Activated CD4-positive, alpha-beta memory T cell treated with anti-CD3 and anti-CD28 coated beads for 36 hours (primary cell): ENCODE measurements at regions of chr10 and their contacts with region 1.

Region 1: GRCh38 chr10:97498076-97498840 is at the start of gene MMS19:
- DNase-seq: peak; percentile 99
- H3K4me3 Mint-ChIP-seq: peak within 1 kb of the TSS; percentile 98
- H3K27ac Mint-ChIP-seq: peak within 1 kb of the TSS; percentile 97
- H3K4me1 Mint-ChIP-seq: peaks cover 33% of the 10 kb centered on the region
- H3K27me3 Mint-ChIP-seq: peaks cover 23% of the 10 kb centered on the region
- total RNA-seq, gene MMS19: 84.7 to 86.8 TPM

Region 2: DNA sequence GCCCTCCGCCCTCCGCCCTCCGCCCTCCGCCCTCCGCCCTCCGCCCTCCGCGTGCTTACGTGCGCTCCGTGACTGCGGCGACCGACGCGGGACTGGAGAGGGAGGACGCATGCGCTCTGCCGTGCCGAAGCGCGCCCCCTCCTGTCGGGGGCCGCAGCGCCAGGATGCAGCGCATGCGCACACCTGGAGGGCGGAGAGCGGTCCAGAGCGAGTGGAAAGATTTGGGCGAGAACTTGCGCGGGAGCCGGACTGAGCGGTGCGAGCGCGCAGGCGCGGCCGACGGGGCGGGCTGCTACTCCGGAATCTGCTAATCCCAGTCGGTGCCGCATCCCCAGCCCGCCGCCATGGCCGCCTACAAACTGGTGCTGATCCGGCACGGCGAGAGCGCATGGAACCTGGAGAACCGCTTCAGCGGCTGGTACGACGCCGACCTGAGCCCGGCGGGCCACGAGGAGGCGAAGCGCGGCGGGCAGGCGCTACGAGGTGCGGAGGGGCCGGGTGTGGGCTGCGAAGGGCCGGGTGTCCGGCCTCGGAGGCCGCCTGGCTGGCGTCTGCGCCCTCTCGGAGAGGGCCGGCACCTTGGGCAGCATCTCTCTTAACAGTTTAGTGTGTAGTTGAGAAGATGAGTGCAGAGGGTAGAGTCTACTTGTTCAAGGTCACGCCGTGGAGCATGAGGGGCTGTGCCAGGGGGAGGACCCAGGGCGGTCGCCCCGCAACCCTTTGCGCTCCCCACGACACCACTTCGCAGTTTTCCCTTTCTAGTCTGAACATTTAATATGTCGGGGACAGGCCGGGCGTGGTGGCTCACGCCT is 72.1 kb before region 1 on chr10 and contains the start of gene PGAM1:
- CTCF ChIA-PET with region 1: no interaction called
- POLR2A ChIA-PET with region 1: interaction called, 7 read pairs
- intact Hi-C with region 1: loop called (anchors 1 kb)
- DNase-seq: peak; percentile 97
- H3K4me3 Mint-ChIP-seq: peak within 1 kb of the TSS; percentile 93
- H3K27ac Mint-ChIP-seq: peak within 1 kb of the TSS; percentile 98
- H3K4me1 Mint-ChIP-seq: peaks cover 47% of the 10 kb centered on the region
- H3K27me3 Mint-ChIP-seq: peaks cover 2% of the 10 kb centered on the region
- total RNA-seq, gene PGAM1: 1,430 to 1,457 TPM

Region 3: DNA sequence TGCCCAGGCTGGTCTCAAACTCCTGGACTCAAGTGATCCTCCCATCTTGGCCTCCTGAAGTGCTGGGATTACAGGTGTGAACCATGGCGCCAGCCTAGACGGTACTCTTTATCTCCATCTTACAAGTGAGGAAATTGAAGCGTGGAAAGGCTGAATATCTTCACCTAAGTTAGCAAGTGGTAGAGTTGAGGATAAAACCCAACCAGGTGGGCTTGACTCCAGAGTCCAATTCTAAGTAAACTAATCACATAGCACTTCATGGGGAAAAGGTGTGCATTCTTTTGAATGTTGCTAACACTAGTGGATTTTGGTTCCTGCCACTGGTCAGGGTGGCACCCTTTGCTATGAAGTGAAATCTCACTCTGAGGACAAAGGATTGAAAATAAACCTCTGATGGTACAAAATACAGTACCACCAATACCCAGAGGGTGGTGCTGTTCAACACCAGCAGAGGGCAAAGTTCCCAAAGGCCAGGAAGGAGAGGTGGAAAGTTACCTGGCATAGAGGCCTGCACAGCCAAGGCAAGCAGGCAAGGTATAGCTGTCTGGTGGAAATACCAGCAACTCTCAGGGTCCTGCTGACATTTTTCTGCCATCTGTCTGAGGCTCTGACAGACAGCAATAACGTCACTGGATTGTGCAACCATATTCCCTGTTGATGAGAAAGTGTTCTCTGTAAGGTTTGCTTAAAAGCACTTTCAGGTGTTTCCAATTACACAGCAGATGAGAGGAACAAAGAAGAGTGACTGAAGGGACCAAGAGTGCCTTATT is 34.7 kb before region 1 on chr10:
- CTCF ChIA-PET with region 1: interaction called, 4 read pairs
- POLR2A ChIA-PET with region 1: no interaction called
- intact Hi-C with region 1: loop called (anchors 5 kb)
- DNase-seq: peak; percentile 36
- H3K4me3 Mint-ChIP-seq: no peak overlapping the region
- H3K27ac Mint-ChIP-seq: peak overlapping the region; percentile 3
- H3K4me1 Mint-ChIP-seq: no peaks in the 10 kb centered on the region
- H3K27me3 Mint-ChIP-seq: no peaks in the 10 kb centered on the region

Region 4: DNA sequence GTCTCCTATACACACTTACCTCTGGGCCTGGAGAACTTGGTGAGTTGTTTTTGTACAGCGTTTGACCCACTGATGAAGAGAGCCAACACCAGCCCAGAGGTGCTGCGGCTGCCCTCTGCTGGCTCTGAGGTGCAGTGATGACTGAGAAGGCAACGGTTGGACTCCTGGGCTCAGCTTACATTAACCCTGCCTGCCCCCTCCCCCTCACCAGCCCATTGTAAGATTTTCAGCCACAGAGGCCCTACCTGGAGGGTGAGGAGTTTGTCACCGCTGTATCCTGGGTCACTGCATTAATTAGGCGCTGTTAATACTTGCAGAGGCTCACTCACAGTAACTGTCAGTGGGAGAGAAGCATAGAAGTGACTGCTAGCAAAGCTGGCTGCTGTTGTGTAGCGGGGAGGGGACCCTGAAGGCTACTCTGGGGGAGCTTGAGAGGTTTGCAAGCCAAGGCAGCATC is 55.3 kb after region 1 on chr10:
- CTCF ChIA-PET with region 1: interaction called, 18 read pairs
- POLR2A ChIA-PET with region 1: no interaction called
- intact Hi-C with region 1: loop called (anchors 2 kb)
- DNase-seq: peak; percentile 75
- H3K4me3 Mint-ChIP-seq: no peak overlapping the region
- H3K27ac Mint-ChIP-seq: no peak overlapping the region
- H3K4me1 Mint-ChIP-seq: no peaks in the 10 kb centered on the region
- H3K27me3 Mint-ChIP-seq: no peaks in the 10 kb centered on the region

Region 5: DNA sequence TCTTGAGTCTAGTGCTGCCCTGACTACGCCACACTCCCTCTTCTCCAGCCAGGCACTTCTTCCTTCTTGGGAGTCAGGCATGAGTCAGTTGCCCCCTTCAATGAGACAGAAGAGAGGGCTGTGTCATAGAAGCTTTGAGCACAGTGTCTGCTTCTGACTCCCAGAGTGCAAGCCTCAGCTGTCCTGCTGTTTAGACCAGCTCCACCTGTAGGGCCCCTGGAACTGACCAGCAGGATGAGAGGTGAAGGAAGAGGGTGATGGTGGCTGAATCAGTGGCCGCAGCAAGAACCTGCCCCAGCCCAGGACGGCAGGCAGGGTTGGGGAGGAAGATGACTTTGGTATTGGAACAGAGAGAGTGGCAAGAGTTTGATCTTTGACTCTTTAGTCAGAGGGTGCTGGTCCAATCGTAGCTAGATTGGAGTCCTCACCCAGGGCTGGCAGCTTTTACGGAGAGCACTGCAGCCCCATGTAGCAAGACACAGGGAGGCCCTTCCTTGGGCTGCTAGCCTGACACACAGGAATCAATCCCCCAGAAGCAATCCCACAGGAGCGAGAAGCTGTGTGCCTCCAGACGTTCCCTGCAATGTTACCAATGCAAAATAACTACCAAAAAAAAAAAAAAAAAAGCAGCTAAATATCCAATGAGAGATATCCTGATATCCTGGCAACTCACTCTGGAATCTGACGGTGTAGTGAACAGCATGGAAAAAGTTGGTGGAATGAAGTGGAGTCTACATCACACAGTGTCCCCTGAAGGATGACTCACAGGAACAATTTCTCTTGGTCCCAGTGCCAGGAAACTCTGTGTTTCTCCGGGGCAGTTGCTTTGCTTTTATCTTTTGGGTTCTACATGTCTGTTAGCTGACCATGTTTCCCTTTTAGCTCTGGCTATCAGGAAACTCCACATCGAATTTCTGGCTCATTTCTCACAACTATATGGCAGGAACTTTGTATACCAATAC is 98.1 kb after region 1 on chr10:
- CTCF ChIA-PET with region 1: no interaction called
- POLR2A ChIA-PET with region 1: no interaction called
- intact Hi-C with region 1: no loop called
- DNase-seq: no peak
- H3K4me3 Mint-ChIP-seq: no peak overlapping the region
- H3K27ac Mint-ChIP-seq: no peak overlapping the region
- H3K4me1 Mint-ChIP-seq: no peaks in the 10 kb centered on the region
- H3K27me3 Mint-ChIP-seq: no peaks in the 10 kb centered on the region

Region 6: GRCh38 chr10:97659589-97659988 is 161.3 kb after region 1 on chr10:
- CTCF ChIA-PET with region 1: no interaction called
- POLR2A ChIA-PET with region 1: no interaction called
- intact Hi-C with region 1: no loop called
- DNase-seq: no peak
- H3K4me3 Mint-ChIP-seq: no peak overlapping the region
- H3K27ac Mint-ChIP-seq: no peak overlapping the region
- H3K4me1 Mint-ChIP-seq: no peaks in the 10 kb centered on the region
- H3K27me3 Mint-ChIP-seq: no peaks in the 10 kb centered on the region